ENCODE measurements at regions of chr14 and their contacts with region 1.

Region 1: DNA sequence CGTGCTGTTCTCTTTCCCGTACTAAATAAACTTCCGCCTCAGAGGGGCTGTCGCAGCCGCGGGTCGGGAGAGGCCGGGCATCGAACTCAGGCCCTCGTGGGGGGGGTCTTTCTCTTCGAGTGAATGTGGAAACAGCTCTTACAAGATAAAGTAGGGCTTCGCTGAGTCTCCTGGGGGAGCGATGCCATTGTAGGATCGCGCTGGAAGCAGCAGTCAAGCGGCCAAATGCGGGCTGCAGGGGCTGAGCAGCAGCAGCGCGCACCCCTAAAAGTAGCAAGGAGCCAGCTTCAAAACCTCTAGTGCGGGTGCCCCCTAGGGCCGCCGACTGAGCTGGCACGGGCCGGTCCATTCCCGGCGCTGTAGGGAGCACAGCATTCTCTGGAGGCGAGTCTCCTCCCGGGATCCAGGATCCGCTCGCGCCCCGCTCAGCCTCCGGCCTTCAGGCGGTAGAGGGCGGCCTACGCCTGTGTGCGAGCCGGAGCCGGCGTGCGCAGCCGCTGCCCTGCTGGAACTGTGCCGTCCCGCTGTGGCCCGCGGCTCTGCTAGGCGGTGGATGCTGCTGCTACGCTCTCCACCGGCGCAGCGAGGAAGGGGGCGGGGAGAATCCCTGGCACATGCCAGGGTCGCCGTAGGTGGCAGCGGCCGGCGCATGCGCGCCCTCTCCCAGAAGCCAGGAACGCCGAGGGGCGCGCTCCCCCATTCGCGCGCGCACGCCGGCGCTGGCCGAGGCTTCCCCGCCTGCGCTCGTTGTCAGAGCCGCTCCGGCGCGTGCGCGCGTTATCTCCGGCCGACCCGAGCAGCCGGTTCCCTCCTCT is at the start of gene FUT8:
- DNase-seq: peak; percentile 95
- H3K4me3 ChIP-seq: peak within 1 kb of the TSS; percentile 94 to 95
- H3K27ac ChIP-seq: peak within 1 kb of the TSS; percentile 91 to 97
- H3K4me1 ChIP-seq: peaks cover 0 to 6% of the 10 kb centered on the region in 2 experiments; a peak in 2 of 4 replicates
- H3K27me3 ChIP-seq: no peaks in the 10 kb centered on the region
- CTCF ChIP-seq: peak; percentile 65
- EP300 ChIP-seq: peak; percentile 13 to 46; a peak in 2 of 4 replicates
- RAD21 ChIP-seq: peak; percentile 71
- polyA plus RNA-seq, gene FUT8: 31.7 and 32.4 TPM in 2 replicates

Region 2: GRCh38 chr14:65137648-65138307 is 274.5 kb before region 1 on chr14:
- CTCF ChIA-PET with region 1: no interaction called
- POLR2A ChIA-PET with region 1: no interaction called
- DNase-seq: no peak
- H3K4me3 ChIP-seq: no peak overlapping the region
- H3K27ac ChIP-seq: no peak overlapping the region
- H3K4me1 ChIP-seq: no peaks in the 10 kb centered on the region; a peak in 1 of 4 replicates
- H3K27me3 ChIP-seq: peaks cover 6% of the 10 kb centered on the region; the same call in 1 of the 2 replicates
- CTCF ChIP-seq: no peak
- EP300 ChIP-seq: no peak
- RAD21 ChIP-seq: no peak

Region 3: DNA sequence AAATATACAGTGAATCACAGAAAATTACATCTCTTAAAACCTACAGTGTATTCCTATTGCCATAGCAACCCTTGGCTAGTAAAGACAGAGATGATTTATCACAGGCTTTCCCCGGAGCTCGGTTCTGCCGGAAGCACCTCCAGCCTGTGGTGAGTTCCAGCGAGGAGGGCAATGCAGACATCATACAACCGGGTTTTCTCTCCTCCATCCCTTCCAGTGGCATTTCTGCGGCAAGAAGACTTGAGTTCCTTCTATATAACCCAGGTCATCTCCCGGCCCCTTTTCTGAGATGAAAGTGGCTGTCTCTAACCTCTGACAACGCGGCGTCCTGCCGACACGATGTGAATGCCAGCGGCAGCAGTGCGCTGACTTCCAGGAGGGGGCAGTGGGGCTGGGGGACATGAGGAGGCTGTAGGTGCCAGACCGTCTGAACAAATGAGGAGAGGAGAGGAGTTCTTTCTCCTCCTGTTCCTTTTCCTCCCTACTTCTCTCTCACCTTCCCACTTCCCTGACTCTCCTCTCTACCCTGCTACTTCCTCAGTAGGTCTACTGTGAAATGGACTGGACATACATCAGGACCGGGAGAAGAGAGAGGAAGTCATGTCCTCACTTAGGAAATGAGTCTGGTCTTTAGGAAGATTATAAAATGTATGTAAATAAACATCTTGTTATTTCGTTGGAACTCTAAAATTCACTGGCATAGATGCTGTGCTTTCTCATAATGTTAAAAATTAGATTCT is 241.3 kb before region 1 on chr14:
- CTCF ChIA-PET with region 1: interaction called, 30 read pairs
- POLR2A ChIA-PET with region 1: interaction called, 3 read pairs
- DNase-seq: peak; percentile 65
- H3K4me3 ChIP-seq: peak overlapping the region; percentile 32 to 47
- H3K27ac ChIP-seq: peak overlapping the region; percentile 74 to 91
- H3K4me1 ChIP-seq: peaks cover 2 to 10% of the 10 kb centered on the region in 2 experiments; a peak in 2 of 4 replicates
- H3K27me3 ChIP-seq: no peaks in the 10 kb centered on the region
- CTCF ChIP-seq: peak; percentile 52
- EP300 ChIP-seq: no peak
- RAD21 ChIP-seq: peak; percentile 44

Region 4: DNA sequence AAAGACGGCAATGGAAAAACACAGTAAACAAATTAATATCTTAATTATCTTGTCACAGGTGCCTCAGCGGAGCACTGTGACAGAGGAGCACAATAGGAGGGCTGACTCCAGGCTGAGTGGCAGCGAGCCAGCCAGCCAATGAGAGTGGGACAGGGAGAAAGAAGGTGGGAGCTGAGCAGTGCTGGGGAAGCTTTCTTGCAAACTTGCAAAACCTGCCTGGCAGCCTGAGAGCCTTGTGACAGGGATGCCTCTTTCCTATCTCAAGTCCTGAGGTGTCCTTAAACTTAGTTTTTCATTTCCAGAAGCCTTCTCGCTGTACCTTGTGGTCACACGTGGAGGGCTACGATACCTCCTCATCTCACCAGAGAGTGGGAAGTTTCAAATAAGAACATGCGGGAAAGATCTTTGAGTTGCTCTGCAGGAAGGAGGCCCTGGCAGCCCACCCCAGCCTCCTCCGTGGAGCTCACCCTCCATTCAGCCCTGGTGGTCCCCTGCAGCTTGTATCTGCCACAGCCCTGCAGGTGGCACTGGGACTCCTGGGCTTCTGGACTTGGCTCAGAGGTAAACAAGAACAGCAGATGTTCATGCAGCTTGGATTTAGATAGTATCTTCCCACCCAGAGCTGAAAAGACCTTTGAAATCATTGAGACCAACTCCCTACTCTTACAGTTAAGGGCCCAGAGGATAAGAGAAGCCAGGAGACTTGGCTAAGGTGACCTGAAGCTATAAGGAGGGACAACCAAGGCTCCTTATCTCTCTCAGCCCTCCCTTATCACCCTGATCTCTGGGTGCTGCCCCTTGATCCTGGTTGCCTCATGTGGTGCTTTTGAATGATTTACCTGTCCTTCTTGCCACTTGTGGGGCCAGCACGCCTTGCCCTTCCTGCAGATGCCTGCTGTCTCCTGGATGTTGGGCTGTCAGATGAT is 156.4 kb before region 1 on chr14:
- CTCF ChIA-PET with region 1: interaction called, 10 read pairs
- POLR2A ChIA-PET with region 1: no interaction called
- DNase-seq: peak; percentile 40
- H3K4me3 ChIP-seq: no peak overlapping the region
- H3K27ac ChIP-seq: peak overlapping the region; percentile 50 to 88
- H3K4me1 ChIP-seq: peaks cover 7 to 16% of the 10 kb centered on the region in 2 experiments
- H3K27me3 ChIP-seq: no peaks in the 10 kb centered on the region
- CTCF ChIP-seq: no peak
- EP300 ChIP-seq: no peak
- RAD21 ChIP-seq: peak; percentile 51

Region 5: DNA sequence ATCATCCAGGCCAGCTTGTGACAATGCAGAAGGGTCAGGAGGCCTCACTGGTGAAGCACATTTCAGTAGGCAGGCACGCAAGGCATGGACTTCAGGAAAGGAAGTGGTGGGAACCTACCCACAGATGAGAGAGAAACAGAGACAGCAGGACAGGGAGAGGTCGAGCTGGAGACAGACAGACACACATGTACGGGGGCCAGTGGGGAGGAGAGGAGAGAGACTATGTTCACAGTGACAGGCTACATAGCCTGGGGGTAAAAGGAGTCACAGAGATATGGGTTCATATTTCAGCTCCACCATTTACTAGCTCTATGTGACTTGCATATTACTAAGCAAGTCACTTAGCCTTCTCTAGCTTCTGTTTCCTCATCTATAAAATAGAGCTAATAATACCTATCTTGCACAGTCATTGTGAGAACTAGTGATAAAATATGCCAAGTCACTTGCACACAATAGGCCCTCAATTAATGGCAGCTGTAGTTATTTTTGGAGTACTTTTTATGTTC is 90.8 kb before region 1 on chr14:
- CTCF ChIA-PET with region 1: no interaction called
- POLR2A ChIA-PET with region 1: no interaction called
- DNase-seq: no peak
- H3K4me3 ChIP-seq: no peak overlapping the region
- H3K27ac ChIP-seq: no peak overlapping the region
- H3K4me1 ChIP-seq: peaks cover 0 to 11% of the 10 kb centered on the region in 2 experiments; a peak in 1 of 4 replicates
- H3K27me3 ChIP-seq: no peaks in the 10 kb centered on the region
- CTCF ChIP-seq: no peak
- EP300 ChIP-seq: no peak
- RAD21 ChIP-seq: no peak

Region 6: DNA sequence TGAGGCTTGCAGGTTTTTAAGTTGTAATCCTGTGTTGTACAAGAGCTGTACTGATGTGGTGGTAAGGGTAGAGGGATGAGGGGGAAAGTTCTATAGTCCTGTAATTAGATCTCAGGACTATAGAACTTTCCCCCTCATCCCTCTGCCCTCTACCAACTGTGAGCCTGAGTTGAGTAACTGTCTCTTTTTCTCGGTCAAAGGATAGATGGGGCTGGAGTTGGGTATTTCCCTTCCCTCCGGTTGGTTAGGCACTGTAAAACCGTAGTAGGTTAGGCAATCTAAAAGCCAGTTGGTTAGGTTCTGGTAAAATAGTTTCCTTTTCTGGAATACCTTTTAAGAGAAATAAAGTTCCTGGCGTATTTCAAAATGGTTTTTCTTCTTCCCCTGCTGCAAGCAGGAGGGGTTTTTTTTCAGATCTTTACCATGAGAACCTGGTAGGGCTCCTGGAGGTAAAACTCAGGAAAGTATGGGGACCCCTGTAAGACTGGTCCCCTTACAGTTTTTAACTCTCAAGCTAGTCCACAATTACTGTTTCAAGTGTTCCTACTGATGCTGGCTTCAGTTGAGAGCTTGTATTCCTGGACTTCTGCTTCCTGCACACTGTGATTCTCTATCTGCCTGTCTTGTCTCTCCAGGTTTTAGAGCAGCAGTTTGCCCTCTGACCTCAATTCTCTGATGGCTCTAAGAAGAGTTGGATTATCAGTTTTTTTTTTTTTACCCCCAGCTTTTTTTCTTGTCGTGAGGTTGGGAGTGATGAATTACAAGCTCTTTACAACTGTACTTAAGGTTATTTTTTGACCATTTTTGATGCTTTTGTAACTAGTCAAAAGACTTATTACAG is 59.0 kb after region 1 on chr14:
- CTCF ChIA-PET with region 1: no interaction called
- POLR2A ChIA-PET with region 1: no interaction called
- DNase-seq: no peak
- H3K4me3 ChIP-seq: no peak overlapping the region
- H3K27ac ChIP-seq: no peak overlapping the region
- H3K4me1 ChIP-seq: peaks cover 0 to 17% of the 10 kb centered on the region in 2 experiments; a peak in 2 of 4 replicates
- H3K27me3 ChIP-seq: no peaks in the 10 kb centered on the region
- CTCF ChIP-seq: no peak
- EP300 ChIP-seq: no peak
- RAD21 ChIP-seq: no peak

Region 7: DNA sequence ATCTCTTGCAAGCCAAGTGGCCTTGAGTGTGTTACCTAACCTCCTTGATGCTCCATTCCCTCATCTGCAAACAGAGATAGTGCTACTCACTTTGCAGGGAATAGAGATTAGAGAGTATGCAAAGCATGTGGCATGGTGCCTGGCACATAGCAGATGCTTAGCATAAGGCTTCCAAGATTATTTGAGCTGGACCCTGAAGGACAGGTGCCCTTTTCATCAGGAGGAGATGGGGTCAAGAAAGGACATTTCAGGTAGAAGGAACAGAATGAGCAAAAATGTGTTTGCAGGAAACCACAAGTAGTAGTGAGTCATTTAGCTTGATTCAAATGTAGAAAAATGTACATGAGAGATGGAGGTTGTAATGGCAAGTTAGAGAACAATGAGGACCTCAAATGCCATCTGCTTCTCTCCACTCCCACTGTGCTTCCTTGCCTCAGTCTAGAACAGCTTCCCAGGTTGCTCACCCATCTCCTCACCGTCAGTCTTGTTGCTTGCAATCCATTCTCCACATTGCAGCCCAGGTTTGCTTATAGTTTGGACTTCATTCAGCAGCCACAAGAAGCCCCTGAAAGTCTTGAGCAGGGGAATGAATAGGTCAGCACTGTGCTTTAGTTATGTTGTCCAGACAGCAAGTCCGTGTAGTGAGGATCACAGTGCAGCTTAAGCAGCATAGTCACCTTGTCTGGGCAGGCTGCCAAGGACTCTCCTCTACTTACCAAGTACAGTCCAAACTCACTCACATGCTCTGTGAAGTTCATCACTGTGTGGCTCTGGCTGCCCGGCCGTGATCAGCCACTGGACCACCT is 537.7 kb after region 1 on chr14:
- CTCF ChIA-PET with region 1: interaction called, 13 read pairs
- POLR2A ChIA-PET with region 1: no interaction called
- DNase-seq: no peak
- H3K4me3 ChIP-seq: no peak overlapping the region
- H3K27ac ChIP-seq: no peak overlapping the region
- H3K4me1 ChIP-seq: peaks cover 0 to 11% of the 10 kb centered on the region in 2 experiments; a peak in 1 of 4 replicates
- H3K27me3 ChIP-seq: no peaks in the 10 kb centered on the region
- CTCF ChIP-seq: no peak
- EP300 ChIP-seq: no peak
- RAD21 ChIP-seq: no peak

Region 8: GRCh38 chr14:65958664-65959562 is 546.7 kb after region 1 on chr14:
- CTCF ChIA-PET with region 1: interaction called, 92 read pairs
- POLR2A ChIA-PET with region 1: interaction called, 3 read pairs
- DNase-seq: peak; percentile 49
- H3K4me3 ChIP-seq: no peak overlapping the region
- H3K27ac ChIP-seq: no peak overlapping the region
- H3K4me1 ChIP-seq: no peaks in the 10 kb centered on the region
- H3K27me3 ChIP-seq: no peaks in the 10 kb centered on the region
- CTCF ChIP-seq: peak; percentile 69
- EP300 ChIP-seq: no peak
- RAD21 ChIP-seq: peak; percentile 65